ENCODE measurements at regions of chr5 and their contacts with region 1.

Region 1: DNA sequence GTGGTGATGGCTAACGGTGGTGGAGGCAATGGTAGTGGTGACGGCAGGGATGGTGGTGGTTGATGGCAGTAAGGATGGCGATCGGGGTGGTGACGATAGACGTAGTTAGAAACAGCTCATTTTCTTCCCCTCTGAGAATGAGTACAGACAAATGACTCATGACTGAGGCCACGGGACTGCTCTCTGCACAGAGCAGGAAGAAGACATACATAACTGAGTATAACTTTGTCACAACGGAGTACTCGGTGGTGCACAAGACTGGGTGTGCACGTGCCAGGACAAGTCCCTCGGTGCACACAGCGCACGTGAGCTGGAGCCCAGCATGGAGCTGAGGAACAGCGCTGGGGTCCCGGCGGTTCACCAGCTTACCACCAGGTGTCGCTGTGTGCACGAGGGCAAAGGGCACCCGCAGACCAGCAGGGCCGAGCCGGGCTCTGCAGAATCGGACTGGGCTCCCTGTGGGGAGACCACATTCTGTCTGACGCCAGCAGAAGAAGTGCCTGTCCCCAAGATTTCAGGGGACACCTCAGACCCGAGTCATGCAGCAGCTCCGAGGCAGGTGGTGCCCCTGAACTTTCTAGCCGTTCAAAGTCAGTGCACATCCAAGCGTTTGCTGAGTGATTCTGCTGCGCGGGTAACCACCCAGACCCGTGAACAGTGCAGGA is 188.6 kb downstream of the FSTL4 start:
- DNase-seq: peak; percentile 72
- ATAC-seq: peak; percentile 89

Region 2: GRCh38 chr5:133130387-133131118 is 293.2 kb before region 1 on chr5:
- intact Hi-C with region 1: no loop called
- DNase-seq: no peak
- ATAC-seq: no peak

Region 3: GRCh38 chr5:133605323-133605722 is 181.6 kb after region 1 on chr5:
- intact Hi-C with region 1: loop called in 1 of 2 experiments (anchors 5 kb)
- DNase-seq: no peak
- ATAC-seq: peak; percentile 51 to 92

Region 4: GRCh38 chr5:133868946-133869518 is 445.3 kb after region 1 on chr5:
- intact Hi-C with region 1: loop called (anchors 5 to 10 kb)
- DNase-seq: peak; percentile 85
- ATAC-seq: peak; percentile 75 to 81

Region 5: DNA sequence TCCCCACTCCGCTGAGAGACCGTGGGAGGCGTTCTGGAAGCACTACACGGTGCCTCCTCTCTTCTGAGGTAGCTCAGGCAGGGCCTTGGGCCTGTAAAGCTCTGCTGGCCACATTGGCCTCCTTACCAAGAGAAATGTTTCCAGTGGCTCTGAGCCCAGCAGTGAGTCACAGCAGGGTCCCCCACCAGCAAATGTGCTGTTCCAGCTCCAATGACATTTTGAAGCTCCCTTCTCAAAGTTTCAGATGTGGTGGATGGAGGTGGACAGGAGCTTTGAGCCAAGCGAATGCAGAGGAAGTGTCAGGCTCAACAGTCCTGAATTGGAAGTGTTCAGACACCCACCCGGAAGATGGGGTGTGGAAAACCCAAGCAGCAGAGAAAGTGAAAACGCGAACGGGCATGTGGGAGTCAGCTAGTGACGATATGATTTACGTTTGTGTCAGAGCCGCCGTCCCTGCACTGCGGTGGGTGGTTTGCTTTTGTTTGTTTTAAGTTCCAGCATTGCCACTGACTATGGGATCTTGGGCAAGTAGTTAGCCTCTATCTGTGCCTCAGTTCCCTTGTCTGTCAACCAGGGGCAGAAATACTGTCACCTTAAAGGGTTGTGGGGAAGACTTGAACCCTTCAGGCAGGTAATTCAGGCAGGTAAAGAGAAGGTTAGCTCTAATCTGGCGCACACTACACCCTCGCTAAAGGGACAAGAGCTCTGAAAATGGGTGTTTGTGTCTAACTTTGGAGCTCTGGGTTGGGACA is 506.5 kb after region 1 on chr5:
- intact Hi-C with region 1: loop called in 1 of 2 experiments (anchors 10 kb)
- DNase-seq: peak; percentile 54
- ATAC-seq: peak; percentile 35 to 66

Region 6: GRCh38 chr5:133944263-133945185 is 520.8 kb after region 1 on chr5:
- intact Hi-C with region 1: loop called (anchors 10 kb)
- DNase-seq: no peak
- ATAC-seq: peak; percentile 33 to 67

Measured in left cardiac atrium (tissue), 4 donors.